Mammary epithelial cell (primary cell): ENCODE measurements at regions of chr13 and their contacts with region 1.

Region 1: DNA sequence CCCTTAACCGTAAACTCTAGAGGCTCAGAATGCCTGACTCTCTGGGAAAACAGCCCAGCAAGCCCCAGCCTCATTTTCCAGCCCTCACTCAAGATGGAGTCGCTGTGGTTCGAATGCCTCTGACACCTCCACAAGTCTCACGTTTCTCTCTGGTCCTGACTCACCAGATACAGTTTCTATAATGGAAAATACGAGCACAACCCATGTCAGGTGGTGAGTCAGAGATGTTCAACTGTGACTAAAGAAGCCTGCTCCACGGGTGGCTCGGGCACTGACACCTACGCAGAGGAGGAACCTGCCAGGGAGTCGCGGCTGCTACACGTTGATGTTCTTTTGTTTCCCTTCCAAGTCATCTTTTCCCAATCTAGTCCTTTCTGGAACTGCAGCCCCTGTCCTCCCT is 87.1 kb upstream of the STK24 start:
- DNase-seq: peak; percentile 96
- H3K4me3 ChIP-seq: no peak overlapping the region
- H3K27ac ChIP-seq: no peak overlapping the region
- H3K4me1 ChIP-seq: peaks cover 17% of the 10 kb centered on the region
- H3K27me3 ChIP-seq: peaks cover 2% of the 10 kb centered on the region
- CTCF ChIP-seq: no peak

Region 2: GRCh38 chr13:98133946-98134345 is 530.1 kb before region 1 on chr13:
- CTCF ChIA-PET with region 1: no interaction called
- dilution Hi-C with region 1: loop called (anchors 25 kb)
- in situ Hi-C with region 1: loop called in 1 of 2 experiments (anchors 10 kb)
- intact Hi-C with region 1: no loop called
- DNase-seq: no peak
- H3K4me3 ChIP-seq: no peak overlapping the region
- H3K27ac ChIP-seq: no peak overlapping the region
- H3K4me1 ChIP-seq: no peaks in the 10 kb centered on the region
- H3K27me3 ChIP-seq: peaks cover 2% of the 10 kb centered on the region
- CTCF ChIP-seq: no peak

Region 3: GRCh38 chr13:99004978-99005377 is 340.9 kb after region 1 on chr13:
- CTCF ChIA-PET with region 1: no interaction called
- dilution Hi-C with region 1: no loop called
- in situ Hi-C with region 1: no loop called
- intact Hi-C with region 1: no loop called
- DNase-seq: no peak
- H3K4me3 ChIP-seq: no peak overlapping the region
- H3K27ac ChIP-seq: no peak overlapping the region
- H3K4me1 ChIP-seq: peaks cover 2% of the 10 kb centered on the region
- H3K27me3 ChIP-seq: no peaks in the 10 kb centered on the region
- CTCF ChIP-seq: no peak